ENCODE measurements at regions of chr11 and their contacts with region 1.

Region 1: GRCh38 chr11:59097113-59097708 is 9.8 kb upstream of the FAM111B start:
- DNase-seq: peak; percentile 70
- ATAC-seq: no peak

Region 2: GRCh38 chr11:58980159-58980843 is 116.9 kb before region 1 on chr11:
- intact Hi-C with region 1: no loop called
- DNase-seq: no peak
- ATAC-seq: no peak

Region 3: GRCh38 chr11:58999291-58999680 is 97.9 kb before region 1 on chr11:
- intact Hi-C with region 1: no loop called
- DNase-seq: no peak
- ATAC-seq: no peak

Region 4: GRCh38 chr11:59135648-59136461 is 38.6 kb after region 1 on chr11:
- intact Hi-C with region 1: loop called in 1 of 2 experiments (anchors 5 kb)
- DNase-seq: peak; percentile 84
- ATAC-seq: peak; percentile 97 to 98

Region 5: DNA sequence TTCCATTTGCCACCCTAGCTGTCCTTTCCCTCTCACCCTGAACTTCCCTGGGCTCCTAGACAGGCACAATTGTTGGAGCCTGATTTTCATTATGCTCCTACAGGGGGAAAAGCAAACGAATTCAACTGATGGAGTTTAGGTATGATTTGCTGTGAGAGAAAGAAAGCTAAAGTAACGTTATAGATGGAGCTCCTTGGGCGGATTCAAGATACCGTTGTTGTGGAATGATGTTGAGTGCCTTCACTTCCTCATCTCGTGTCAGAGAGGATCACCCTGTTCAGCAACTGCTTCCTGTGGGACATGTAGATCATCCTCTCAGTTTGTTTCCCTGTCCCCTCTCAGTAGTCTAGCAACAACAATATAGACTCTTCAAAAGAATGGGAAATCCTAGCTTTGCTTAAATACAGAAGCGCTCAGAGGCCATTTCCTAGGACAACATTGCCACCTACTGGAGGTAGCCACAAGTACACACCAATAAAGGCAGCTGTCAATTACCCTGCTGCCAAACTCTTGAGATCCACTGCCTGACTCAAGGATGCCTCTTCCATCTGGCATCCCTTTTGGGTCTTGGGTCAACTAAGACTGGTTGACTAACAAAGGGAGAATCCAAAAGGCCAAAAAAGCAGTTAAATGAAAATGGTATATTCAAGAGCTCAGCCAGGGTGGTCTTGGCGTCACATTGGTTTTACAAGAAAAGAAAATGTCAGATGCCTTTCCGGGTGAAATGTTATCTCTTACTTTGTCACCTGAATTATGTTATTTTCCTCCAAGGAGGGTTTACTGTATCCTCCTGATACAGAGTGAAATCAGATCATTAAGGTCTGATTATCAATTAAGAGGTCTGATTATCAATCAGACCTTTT is 61.2 kb after region 1 on chr11:
- intact Hi-C with region 1: loop called in 1 of 2 experiments (anchors 2 kb)
- DNase-seq: peak; percentile 34
- ATAC-seq: peak; percentile 83 to 91

Region 6: DNA sequence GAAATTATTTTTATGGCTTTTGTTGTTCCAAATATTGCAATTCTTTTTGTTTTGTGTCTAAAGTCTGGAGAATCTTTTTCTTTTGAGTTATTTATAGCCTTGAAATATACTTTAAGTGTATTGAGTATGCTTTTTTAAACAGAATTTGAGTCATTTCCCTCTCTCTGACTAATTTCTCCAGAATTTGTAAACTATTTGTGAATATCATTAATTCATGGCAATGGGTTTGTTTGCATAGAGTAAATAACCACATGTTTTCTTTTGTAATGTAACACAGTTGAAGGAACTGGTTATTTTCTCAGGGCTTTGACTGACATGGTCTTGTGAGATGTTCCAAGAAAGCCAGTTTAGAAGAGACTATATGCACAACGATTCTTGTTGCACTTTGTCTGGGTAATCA is 146.4 kb after region 1 on chr11:
- intact Hi-C with region 1: no loop called
- DNase-seq: no peak
- ATAC-seq: no peak

Measured in left cardiac atrium (tissue), 4 donors.